ENCODE measurements at regions of chr7 and their contacts with region 1.

Region 1: DNA sequence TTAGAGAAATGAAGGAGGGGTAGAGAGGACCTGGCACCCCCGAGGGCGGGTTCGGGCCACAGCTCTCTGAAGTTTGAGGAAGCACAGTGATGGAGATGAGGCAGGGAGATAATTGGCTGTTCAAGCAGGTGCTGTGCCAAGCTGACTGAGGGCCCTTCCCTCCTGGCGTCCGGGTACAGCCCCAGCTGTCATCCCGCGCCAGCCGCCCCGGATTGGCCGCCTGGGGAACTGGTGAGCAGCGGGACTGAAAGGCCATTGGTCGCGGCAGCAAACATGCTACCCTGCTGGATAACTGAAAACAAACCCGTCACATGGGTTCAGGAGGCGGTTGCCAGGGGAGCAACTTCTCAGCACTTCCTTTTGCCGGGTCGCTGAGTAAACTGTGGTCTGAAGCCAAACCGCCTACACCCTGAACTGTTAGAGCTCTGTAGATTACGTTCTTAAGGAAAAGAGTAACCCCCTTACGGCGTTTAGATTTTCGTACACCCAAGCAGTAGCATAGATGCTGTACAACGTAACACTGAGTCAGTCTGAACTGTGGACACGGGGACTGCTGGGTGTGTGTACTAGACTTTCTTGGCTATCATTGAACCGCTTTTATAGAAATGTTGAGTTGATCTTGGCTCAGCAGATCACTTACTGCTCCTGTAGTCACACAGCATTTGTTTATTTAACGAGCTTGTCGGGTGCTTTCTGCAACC is 1.3 kb downstream of the INSIG1 start:
- DNase-seq: peak; percentile 98

Region 2: DNA sequence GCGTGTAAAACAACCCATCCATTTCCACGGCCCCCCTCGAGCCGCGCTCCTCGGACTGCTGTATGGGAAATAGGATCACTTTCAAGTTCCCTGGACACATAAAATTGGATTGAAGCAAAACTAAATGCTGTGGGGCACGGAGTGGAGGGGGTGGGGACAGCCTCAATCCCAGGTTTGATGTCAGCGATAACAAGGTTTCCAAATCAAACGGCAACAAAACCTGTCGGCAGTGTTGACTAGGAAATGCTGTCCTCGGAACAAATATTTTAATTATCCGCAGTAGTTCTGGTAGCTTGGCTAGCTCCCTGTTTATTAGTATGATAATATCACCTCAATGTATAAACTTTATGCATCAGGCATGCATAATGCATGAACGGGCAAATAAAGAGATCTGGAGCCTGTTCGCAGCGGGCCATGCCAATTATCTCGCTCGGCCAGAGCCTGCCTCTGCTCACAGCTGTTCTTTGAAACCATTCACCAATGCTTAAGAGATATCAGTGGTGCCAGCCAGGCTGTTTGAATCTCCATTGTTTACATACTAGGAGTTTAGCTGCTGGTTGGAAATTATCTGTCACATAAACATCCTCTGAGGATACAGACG is 457.2 kb before region 1 on chr7:
- intact Hi-C with region 1: no loop called
- DNase-seq: no peak

Region 3: GRCh38 chr7:155003376-155004214 is 295.4 kb before region 1 on chr7:
- intact Hi-C with region 1: loop called (anchors 5 kb)
- DNase-seq: peak; percentile 90

Region 4: DNA sequence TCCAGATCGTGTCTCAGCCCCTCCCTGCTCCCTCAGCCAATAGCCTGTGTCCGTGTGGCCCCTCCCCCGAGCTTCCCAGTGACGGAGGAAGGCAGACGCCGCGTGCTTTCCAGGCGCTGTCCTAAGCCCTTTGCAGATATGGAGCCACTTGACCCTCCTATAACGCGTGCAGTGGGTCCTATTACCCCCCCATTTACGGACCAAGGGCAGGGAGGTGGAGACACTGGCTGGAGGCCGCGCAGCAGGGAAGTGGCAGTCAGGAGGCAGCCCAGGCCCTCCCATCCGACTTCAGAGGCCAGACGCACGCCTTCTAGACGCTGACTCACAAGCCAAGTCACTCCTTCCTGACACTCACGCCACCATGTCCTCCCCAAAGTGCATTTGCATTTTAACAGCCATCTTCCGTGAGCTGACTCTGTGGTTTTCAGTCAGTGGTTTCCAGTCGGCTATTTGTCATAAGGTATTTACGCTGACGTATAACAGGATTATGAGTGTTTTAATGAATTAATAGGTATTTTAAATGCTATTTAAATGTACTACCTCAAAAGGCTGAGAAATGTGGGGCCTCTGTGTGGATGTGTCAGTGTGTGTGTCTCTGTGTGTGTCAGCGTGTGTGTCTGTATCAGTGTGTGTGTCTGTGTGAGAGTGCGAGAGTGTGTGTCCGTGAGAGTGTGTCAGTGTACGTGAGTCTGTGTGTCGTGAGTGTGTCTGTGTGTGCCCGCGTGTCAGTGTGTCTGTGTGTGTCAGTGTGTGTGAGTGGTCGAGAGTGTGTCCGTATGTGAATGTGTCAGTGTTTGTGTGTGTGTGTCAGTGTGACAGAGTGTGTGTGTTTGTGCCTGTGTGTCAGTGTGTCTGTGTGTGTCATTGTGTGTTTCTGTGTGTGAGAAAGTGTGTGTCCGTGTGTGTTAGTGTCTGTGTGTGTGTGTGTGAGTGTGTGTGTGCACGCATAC is 93.3 kb before region 1 on chr7:
- intact Hi-C with region 1: loop called (anchors 5 kb)
- DNase-seq: peak; percentile 92

Region 5: DNA sequence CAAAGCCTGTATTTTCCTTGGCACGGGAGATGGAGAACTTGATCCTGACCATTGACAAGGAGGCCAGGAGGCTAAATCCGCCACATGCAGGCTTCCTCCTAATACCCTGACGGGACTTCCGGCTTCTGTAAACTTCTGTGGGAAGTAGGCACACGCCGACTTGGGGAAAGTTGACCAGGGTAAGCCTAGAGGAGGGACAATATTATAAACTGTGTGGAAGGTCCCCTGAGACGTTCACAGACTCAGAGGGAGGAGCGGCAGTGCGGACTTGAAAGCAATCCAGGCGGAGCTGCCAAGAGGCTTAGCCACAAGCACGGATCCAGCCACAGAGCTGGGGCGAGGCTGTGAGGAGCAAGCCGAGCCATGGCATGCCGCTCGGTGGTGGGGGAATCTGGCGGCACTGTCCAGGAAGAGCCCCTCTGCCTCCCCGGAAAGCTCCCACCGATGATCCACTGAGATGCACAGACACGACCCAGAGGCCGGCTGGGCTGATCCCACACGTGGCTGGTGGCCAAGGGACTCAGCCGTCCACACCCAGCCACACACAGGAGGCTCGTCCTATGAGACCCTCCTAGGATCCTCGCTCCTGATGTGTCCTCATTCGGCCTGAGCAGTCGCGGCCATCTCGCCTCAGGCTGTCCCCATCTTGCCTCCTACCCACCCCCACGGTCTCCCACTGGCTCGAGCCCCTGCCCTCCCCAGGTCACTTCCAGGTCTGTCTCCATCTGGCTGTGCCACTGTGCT is 41.3 kb before region 1 on chr7:
- intact Hi-C with region 1: loop called (anchors 1 kb)
- DNase-seq: peak; percentile 83

Region 6: DNA sequence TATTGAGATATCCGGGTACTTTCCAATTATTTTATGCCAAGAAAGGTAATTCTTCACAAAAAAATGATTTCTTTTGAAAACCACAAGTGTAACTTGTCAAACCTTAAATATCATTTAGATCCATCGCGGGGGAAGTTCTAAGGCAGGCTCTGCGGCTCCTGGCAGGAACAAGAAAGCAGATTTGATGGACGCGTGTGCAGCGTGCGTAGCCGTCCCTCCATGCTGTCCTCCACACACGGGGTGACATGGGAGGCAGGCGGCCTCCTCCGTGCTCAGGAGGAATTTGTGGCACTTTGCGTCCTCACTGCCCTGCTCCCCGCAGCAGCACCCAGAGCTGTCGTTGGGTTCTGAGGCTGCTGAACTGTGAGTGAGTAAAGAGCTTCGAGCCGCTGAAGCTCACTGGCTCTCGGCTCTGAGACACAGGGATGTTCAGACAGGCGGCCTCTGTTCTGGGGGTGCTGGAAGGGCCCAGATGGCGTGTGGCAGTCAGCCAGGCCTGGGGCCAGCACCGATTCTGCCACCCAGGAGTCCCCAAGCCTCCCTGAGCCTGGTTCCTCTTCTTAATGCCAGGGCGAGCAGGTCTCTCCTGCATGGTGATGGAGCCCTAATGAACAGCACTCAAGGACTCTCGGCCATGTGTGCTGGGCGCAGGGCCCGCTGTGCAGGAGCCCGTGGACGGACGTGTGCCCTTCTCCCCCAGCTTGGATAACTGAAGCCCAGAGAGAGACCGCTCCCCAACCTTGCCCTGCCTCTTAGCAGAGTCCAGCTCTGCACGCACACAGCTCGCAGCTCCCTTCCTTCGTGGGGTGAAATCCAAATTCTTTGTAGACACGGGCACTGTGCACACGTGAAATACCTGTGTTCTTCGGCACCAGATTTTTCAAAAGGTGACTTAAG is 698.7 kb after region 1 on chr7:
- intact Hi-C with region 1: no loop called
- DNase-seq: peak; percentile 47